ENCODE measurements at regions of chr3 and their contacts with region 1.

Region 1: DNA sequence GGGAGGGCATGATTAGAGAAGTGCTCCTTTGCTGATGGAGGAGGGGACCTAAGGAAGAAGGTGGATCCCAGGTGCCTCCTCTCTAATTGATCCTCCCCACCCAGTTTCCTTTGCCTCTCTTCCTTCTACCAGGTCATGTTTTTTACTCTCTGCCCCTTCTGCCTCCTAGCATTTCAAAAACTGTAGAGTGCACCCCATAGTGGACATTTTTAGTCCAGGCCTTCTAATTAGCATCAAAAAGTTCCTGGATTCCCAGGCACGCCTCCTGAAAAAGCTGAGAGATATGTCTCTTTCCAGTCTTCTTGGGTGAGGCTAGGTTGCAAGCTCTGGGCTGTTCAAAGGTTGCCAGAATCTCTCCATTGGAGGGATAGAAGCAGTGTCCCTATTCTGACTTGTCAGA is 18.7 kb upstream of the ITGB5 start:
- DNase-seq: no peak
- ATAC-seq: peak; percentile 39 to 41; a peak in 2 of 6 replicates
- H3K4me3 ChIP-seq: no peak overlapping the region
- H3K27ac ChIP-seq: no peak overlapping the region
- H3K4me1 ChIP-seq: peaks cover 4% of the 10 kb centered on the region; the same call in 2 of the 3 replicates
- CTCF ChIP-seq: no peak
- EP300 ChIP-seq: no peak
- POLR2A ChIP-seq: no peak
- RAD21 ChIP-seq: peak in 1 of 2 experiments; percentile 25; a peak in 1 of 5 replicates

Region 2: DNA sequence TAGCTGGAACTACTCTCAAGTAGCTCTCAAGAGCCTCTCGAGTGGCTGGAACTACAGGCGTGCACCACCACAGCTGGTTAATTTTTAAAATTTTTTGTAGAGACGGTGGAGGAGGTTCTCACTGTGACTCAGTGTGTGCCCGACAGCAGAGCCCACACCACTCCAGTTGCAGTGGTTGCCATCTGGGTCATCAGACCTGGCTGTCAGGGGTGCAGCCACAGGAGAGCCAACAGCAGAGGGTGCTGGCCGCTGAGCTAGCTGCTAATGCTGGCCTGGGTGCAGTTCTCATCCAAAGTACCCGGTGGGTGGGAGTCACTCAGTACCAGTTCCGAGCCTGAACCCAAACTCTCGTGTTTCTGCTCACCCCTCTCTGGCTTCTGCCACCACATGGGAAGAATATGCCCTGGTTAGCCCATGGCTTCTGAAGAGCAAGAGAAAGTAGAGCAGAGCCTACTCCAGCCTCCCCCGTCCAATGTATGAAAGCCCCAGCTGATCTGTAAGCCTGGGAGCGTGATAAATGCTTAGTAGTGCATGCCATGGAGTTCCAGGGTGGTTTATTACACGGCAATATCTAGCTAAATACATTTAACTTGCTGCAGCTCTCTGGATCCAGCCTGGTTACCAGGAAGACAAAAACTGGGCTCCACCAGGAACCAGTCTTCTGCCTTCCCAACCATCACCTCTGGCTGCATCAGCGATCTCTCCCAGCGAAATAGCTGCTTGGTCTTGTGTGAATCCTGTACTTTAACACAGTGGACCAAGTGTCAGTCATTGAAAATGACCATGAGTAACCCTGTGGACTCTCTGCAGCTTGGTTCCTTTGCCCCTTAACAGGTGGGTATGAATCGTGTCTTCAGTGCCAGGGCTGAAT is 158.5 kb before region 1 on chr3:
- CTCF ChIA-PET with region 1: interaction called, 23 read pairs
- POLR2A ChIA-PET with region 1: no interaction called
- DNase-seq: no peak
- ATAC-seq: peak; percentile 46 to 52; a peak in 4 of 6 replicates
- H3K4me3 ChIP-seq: no peak overlapping the region
- H3K27ac ChIP-seq: no peak overlapping the region
- H3K4me1 ChIP-seq: 0 out of 3 replicates have a peak, but pooled peaks cover 5% of the 10 kb centered on the region
- CTCF ChIP-seq: no peak
- EP300 ChIP-seq: no peak
- POLR2A ChIP-seq: no peak
- RAD21 ChIP-seq: no peak

Region 3: GRCh38 chr3:124791639-124792151 is 114.2 kb before region 1 on chr3:
- CTCF ChIA-PET with region 1: interaction called, 205 read pairs
- POLR2A ChIA-PET with region 1: interaction called, 3 read pairs
- DNase-seq: no peak
- ATAC-seq: no peak
- H3K4me3 ChIP-seq: no peak overlapping the region
- H3K27ac ChIP-seq: peak overlapping the region in 1 of 2 experiments; percentile 39; a peak in 3 of 6 replicates
- H3K4me1 ChIP-seq: peaks cover 50% of the 10 kb centered on the region
- CTCF ChIP-seq: no peak
- EP300 ChIP-seq: no peak
- POLR2A ChIP-seq: no peak
- RAD21 ChIP-seq: no peak

Region 4: GRCh38 chr3:124826703-124827102 is 79.1 kb before region 1 on chr3:
- CTCF ChIA-PET with region 1: interaction called, 13 read pairs
- POLR2A ChIA-PET with region 1: interaction called, 4 read pairs
- DNase-seq: no peak
- ATAC-seq: peak; percentile 51 to 62; a peak in 4 of 6 replicates
- H3K4me3 ChIP-seq: no peak overlapping the region
- H3K27ac ChIP-seq: peak overlapping the region; percentile 52 to 81
- H3K4me1 ChIP-seq: peaks cover 54% of the 10 kb centered on the region
- CTCF ChIP-seq: no peak
- EP300 ChIP-seq: no peak
- POLR2A ChIP-seq: no peak
- RAD21 ChIP-seq: no peak

Region 5: DNA sequence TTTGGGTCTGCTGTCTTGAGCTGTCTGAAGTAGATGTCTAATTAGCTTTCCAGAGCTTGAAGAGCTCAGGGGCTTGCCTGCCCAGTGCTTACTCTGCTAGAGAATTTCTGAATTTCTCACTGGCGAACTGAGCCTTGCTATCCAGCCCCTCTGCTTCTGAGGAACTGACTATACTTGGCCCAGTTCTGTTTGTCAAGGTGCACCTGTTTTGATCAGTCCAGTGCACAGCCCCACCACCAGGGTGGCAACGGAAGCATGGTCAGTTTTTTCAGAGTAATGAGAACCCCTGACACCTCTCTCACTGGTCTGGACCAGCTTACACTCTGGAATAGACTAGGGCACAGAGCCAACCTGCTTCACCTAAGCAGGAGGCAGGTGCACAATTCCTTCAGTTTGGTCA is 43.8 kb before region 1 on chr3:
- CTCF ChIA-PET with region 1: interaction called, 17 read pairs
- POLR2A ChIA-PET with region 1: no interaction called
- DNase-seq: no peak
- ATAC-seq: no peak
- H3K4me3 ChIP-seq: no peak overlapping the region
- H3K27ac ChIP-seq: peak overlapping the region; percentile 83 to 90
- H3K4me1 ChIP-seq: peaks cover 69% of the 10 kb centered on the region
- CTCF ChIP-seq: no peak
- EP300 ChIP-seq: no peak
- POLR2A ChIP-seq: no peak
- RAD21 ChIP-seq: no peak

Region 6: GRCh38 chr3:124916837-124917409 is 11.1 kb after region 1 on chr3:
- CTCF ChIA-PET with region 1: interaction called, 46 read pairs
- POLR2A ChIA-PET with region 1: no interaction called
- DNase-seq: no peak
- ATAC-seq: no peak
- H3K4me3 ChIP-seq: no peak overlapping the region
- H3K27ac ChIP-seq: no peak overlapping the region
- H3K4me1 ChIP-seq: no peaks in the 10 kb centered on the region
- CTCF ChIP-seq: no peak
- EP300 ChIP-seq: no peak
- POLR2A ChIP-seq: no peak
- RAD21 ChIP-seq: no peak

Region 7: DNA sequence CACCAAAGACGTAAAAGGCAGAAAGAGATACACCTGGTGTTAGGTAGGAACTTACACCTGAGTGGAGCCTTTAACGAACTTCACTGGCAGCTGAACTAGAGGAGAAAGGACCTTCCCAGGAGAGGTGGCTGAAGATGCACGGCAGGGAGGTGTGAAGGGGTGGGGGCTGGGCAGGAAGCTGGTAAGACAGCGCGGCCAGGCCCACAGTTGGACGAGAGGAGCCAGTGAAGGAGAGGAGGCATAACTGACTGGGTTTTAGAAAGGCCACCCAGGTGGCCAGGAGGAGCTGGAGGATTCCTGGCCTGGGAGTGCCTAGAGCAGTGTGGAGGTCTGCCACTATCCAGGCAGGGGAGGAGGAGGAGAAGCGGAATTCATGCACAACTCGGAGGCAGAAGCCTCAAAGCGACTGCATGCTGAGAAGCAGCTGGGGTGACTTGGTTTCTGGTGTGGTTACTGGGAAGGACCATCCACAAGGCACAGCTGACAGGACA is 1126.2 kb after region 1 on chr3:
- CTCF ChIA-PET with region 1: no interaction called
- POLR2A ChIA-PET with region 1: no interaction called
- DNase-seq: no peak
- ATAC-seq: no peak
- H3K4me3 ChIP-seq: no peak overlapping the region
- H3K27ac ChIP-seq: no peak overlapping the region
- H3K4me1 ChIP-seq: no peaks in the 10 kb centered on the region
- CTCF ChIP-seq: no peak
- EP300 ChIP-seq: no peak
- POLR2A ChIP-seq: no peak
- RAD21 ChIP-seq: no peak